ENCODE measurements at regions of chrX and their contacts with region 1.

Region 1: GRCh38 chrX:69618803-69619202 is 2.9 kb downstream of the EDA start:
- DNase-seq: peak in 1 of 2 experiments; percentile 13
- H3K4me3 ChIP-seq: no peak overlapping the region
- H3K4me3 Mint-ChIP-seq: no peak overlapping the region
- H3K27ac Mint-ChIP-seq: no peak overlapping the region
- H3K4me1 ChIP-seq: no peaks in the 10 kb centered on the region
- H3K4me1 Mint-ChIP-seq: no peaks in the 10 kb centered on the region
- H3K27me3 ChIP-seq: no peaks in the 10 kb centered on the region
- H3K27me3 Mint-ChIP-seq: no peaks in the 10 kb centered on the region
- CTCF ChIP-seq: peak; percentile 28 to 38

Region 2: GRCh38 chrX:69493193-69493592 is 125.6 kb before region 1 on chrX:
- CTCF ChIA-PET with region 1: no interaction called
- POLR2A ChIA-PET with region 1: no interaction called
- intact Hi-C with region 1: loop called (anchors 1 kb)
- DNase-seq: peak; percentile 42 to 64
- H3K4me3 ChIP-seq: no peak overlapping the region
- H3K4me3 Mint-ChIP-seq: no peak overlapping the region
- H3K27ac Mint-ChIP-seq: no peak overlapping the region
- H3K4me1 ChIP-seq: no peaks in the 10 kb centered on the region
- H3K4me1 Mint-ChIP-seq: no peaks in the 10 kb centered on the region
- H3K27me3 ChIP-seq: no peaks in the 10 kb centered on the region; the same call in 1 of the 2 replicates
- H3K27me3 Mint-ChIP-seq: peaks cover 8% of the 10 kb centered on the region
- CTCF ChIP-seq: peak; percentile 35 to 53

Region 3: DNA sequence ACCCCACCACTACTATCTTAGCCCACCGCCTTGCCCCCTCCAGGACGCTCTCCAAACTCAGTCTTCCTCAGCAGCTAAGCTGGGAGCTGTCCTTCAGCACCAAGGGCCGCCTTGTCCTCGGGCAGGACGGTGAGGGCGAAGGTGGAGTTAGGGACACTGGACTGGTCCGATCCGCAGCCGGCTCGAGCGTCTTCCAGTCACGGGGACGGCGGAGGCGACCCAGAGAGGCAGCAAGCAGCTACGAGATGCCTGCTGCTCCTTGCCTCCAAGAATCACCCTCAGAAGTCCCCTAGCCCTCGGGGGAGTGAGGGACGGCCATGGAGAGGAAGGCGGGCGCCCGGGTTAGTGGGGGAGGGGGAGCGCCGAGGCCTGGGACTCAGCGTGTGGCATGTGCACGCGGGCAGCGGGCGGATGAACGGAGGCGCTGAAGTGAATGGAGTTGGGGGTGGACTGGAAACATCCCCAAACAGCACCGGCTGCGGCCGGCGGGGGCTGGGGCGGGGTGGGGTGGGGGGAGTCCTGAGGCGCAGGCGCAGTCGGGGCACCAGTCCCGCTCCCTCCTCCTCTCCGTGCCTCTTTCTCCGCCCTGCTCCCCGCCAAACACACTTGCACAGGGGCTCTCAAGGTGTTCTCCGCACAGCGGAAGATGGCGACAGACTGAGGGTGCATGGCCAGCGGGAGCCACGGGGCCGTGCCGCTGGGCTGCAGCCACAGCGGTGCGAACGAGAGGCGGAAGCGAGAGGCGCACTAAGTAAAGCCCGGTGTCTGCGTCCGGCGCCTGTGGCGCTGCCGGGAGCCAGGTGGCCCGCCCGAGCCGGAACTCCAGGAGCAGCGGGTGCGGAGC is 114.8 kb before region 1 on chrX and contains the start of gene NALF2:
- CTCF ChIA-PET with region 1: interaction called, 10 read pairs
- POLR2A ChIA-PET with region 1: no interaction called
- intact Hi-C with region 1: no loop called
- DNase-seq: peak; percentile 80 to 81
- H3K4me3 ChIP-seq: peak within 1 kb of the TSS; percentile 63
- H3K4me3 Mint-ChIP-seq: peak within 1 kb of the TSS; percentile 77
- H3K27ac Mint-ChIP-seq: no peak within 1 kb of the TSS
- H3K4me1 ChIP-seq: no peaks in the 10 kb centered on the region
- H3K4me1 Mint-ChIP-seq: no peaks in the 10 kb centered on the region
- H3K27me3 ChIP-seq: no peaks in the 10 kb centered on the region
- H3K27me3 Mint-ChIP-seq: peaks cover 2% of the 10 kb centered on the region
- CTCF ChIP-seq: peak in 1 of 2 experiments; percentile 34
- total RNA-seq, gene NALF2: 3.0 and 3.1 TPM in 2 replicates

Region 4: GRCh38 chrX:69538321-69538876 is 80.4 kb before region 1 on chrX:
- CTCF ChIA-PET with region 1: no interaction called
- POLR2A ChIA-PET with region 1: no interaction called
- intact Hi-C with region 1: loop called (anchors 1 kb)
- DNase-seq: peak in 1 of 2 experiments; percentile 26
- H3K4me3 ChIP-seq: no peak overlapping the region
- H3K4me3 Mint-ChIP-seq: peak overlapping the region; percentile 24
- H3K27ac Mint-ChIP-seq: no peak overlapping the region
- H3K4me1 ChIP-seq: no peaks in the 10 kb centered on the region
- H3K4me1 Mint-ChIP-seq: peaks cover 6% of the 10 kb centered on the region
- H3K27me3 ChIP-seq: no peaks in the 10 kb centered on the region
- H3K27me3 Mint-ChIP-seq: no peaks in the 10 kb centered on the region
- CTCF ChIP-seq: peak in 1 of 2 experiments; percentile 14

Region 5: DNA sequence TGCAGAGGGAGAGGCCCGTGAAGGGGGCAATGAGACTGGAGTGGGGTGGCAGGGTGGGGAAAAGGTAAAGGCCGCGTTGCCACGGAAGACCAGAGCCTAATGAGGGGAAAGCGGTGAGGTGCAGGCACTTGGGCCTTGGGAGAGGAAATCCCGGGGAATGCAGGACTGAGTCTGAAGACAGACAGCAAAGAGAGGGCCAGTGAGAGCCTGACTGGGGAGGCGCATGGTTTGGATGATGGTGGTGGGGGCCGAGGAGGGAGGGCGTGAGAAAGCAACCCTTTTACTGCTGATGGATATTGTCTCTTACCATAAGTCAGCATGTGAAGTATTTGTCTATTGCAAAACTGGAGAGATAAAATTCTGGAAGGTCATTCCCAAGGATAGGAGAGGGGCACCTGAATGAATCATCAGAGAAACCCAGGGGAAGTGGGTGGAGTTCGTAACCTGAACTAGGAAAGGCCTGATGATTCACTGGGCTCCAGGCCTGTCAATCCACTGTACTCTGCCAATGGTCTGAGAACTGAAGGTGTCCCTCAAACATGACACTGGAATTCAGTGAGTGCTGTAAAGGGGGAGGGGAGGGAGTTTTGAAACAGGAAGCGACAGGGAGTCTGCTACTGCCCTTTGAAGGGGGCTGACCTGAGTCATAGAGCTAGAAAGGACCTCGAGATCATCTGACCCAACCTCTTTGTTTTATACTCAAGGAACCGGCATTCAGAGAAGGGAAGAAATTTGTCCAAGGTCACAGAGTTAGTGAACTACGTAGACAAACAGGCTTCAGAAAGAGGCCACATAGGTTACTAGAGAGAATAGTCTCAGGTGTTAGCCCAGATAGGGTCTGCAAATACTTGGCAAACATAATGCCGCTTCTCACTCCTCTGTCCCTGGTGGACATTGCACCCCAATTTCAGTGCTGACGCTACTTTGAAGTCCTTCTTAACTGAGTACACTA is 62.5 kb before region 1 on chrX:
- CTCF ChIA-PET with region 1: interaction called, 3 read pairs
- POLR2A ChIA-PET with region 1: no interaction called
- intact Hi-C with region 1: loop called (anchors 1 kb)
- DNase-seq: peak; percentile 84 to 92
- H3K4me3 ChIP-seq: no peak overlapping the region
- H3K4me3 Mint-ChIP-seq: peak overlapping the region; percentile 54
- H3K27ac Mint-ChIP-seq: peak overlapping the region; percentile 89
- H3K4me1 ChIP-seq: peaks cover 19% of the 10 kb centered on the region
- H3K4me1 Mint-ChIP-seq: no peaks in the 10 kb centered on the region
- H3K27me3 ChIP-seq: no peaks in the 10 kb centered on the region
- H3K27me3 Mint-ChIP-seq: no peaks in the 10 kb centered on the region
- CTCF ChIP-seq: no peak

Region 6: GRCh38 chrX:69568828-69569227 is 50.0 kb before region 1 on chrX:
- CTCF ChIA-PET with region 1: no interaction called
- POLR2A ChIA-PET with region 1: no interaction called
- intact Hi-C with region 1: no loop called
- DNase-seq: no peak
- H3K4me3 ChIP-seq: no peak overlapping the region
- H3K4me3 Mint-ChIP-seq: no peak overlapping the region
- H3K27ac Mint-ChIP-seq: no peak overlapping the region
- H3K4me1 ChIP-seq: no peaks in the 10 kb centered on the region
- H3K4me1 Mint-ChIP-seq: no peaks in the 10 kb centered on the region
- H3K27me3 ChIP-seq: no peaks in the 10 kb centered on the region
- H3K27me3 Mint-ChIP-seq: peaks cover 3% of the 10 kb centered on the region
- CTCF ChIP-seq: no peak

Measured in Caco-2 (cell line).